ENCODE measurements at regions of chrX and their contacts with region 1.

Region 1: GRCh38 chrX:118847676-118848075 is 24.1 kb downstream of the ZCCHC12 start:
- DNase-seq: peak; percentile 42
- ATAC-seq: peak; percentile 75; the same call in 1 of the 2 replicates
- H3K4me3 ChIP-seq: no peak overlapping the region
- H3K27ac ChIP-seq: no peak overlapping the region
- H3K4me1 ChIP-seq: no peaks in the 10 kb centered on the region
- H3K27me3 ChIP-seq: peaks cover 7% of the 10 kb centered on the region
- CTCF ChIP-seq: peak; percentile 69
- POLR2A ChIP-seq: no peak
- RAD21 ChIP-seq: peak; percentile 58

Region 2: GRCh38 chrX:118928151-118928550 is 80.5 kb after region 1 on chrX:
- CTCF ChIA-PET with region 1: no interaction called
- POLR2A ChIA-PET with region 1: no interaction called
- dilution Hi-C with region 1: no loop called
- in situ Hi-C with region 1: no loop called
- intact Hi-C with region 1: no loop called
- DNase-seq: no peak
- ATAC-seq: no peak
- H3K4me3 ChIP-seq: no peak overlapping the region
- H3K27ac ChIP-seq: no peak overlapping the region
- H3K4me1 ChIP-seq: no peaks in the 10 kb centered on the region
- H3K27me3 ChIP-seq: no peaks in the 10 kb centered on the region
- CTCF ChIP-seq: no peak
- POLR2A ChIP-seq: no peak
- RAD21 ChIP-seq: no peak

Region 3: GRCh38 chrX:119067023-119067739 is 219.5 kb after region 1 on chrX:
- CTCF ChIA-PET with region 1: interaction called, 3 read pairs
- POLR2A ChIA-PET with region 1: no interaction called
- dilution Hi-C with region 1: no loop called
- in situ Hi-C with region 1: loop called (anchors 5 kb)
- intact Hi-C with region 1: loop called (anchors 1 kb)
- DNase-seq: peak; percentile 49
- ATAC-seq: peak; percentile 96
- H3K4me3 ChIP-seq: no peak overlapping the region
- H3K27ac ChIP-seq: no peak overlapping the region
- H3K4me1 ChIP-seq: no peaks in the 10 kb centered on the region
- H3K27me3 ChIP-seq: peaks cover 8% of the 10 kb centered on the region
- CTCF ChIP-seq: peak; percentile 70
- POLR2A ChIP-seq: no peak
- RAD21 ChIP-seq: peak; percentile 76

Region 4: GRCh38 chrX:119211649-119212014 is 364.0 kb after region 1 on chrX:
- CTCF ChIA-PET with region 1: no interaction called
- POLR2A ChIA-PET with region 1: no interaction called
- dilution Hi-C with region 1: no loop called
- in situ Hi-C with region 1: no loop called
- intact Hi-C with region 1: loop called (anchors 5 kb)
- DNase-seq: no peak
- ATAC-seq: no peak
- H3K4me3 ChIP-seq: no peak overlapping the region
- H3K27ac ChIP-seq: no peak overlapping the region
- H3K4me1 ChIP-seq: no peaks in the 10 kb centered on the region
- H3K27me3 ChIP-seq: peaks cover 7% of the 10 kb centered on the region
- CTCF ChIP-seq: no peak
- POLR2A ChIP-seq: no peak
- RAD21 ChIP-seq: no peak

Measured in IMR-90 (cell line).